K562 (cell line): ENCODE measurements at regions of chr12 and their contacts with region 1.

Region 1: DNA sequence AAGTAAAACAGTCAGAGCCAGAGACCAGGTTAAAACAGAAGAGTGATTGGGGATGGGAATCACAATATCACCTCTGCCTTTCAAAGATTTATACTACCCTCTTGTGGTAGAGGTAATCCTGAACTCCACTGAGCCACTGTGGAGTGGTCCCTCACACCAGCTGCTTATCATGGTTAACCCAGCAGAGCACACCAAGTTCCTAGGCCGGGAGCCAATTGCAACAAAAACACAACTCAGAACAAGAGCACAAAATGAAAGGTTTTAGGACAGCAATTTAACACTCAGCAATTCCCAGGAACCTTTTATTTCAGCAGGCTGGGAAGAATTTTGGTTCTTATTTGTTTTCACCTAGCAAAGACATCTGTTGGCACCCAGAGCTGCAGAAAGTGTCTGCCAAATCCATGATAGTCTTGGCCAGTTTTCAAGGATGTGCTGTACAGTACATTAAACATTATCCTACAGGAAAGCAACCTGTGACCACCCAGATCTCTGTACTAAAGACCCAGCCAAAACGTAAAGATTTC is 220.5 kb upstream of the ATXN7L3B start:
- DNase-seq: peak in 3 of 4 experiments; percentile 6 to 55 (median 39)
- ATAC-seq: peak; percentile 99
- H3K4me3 ChIP-seq: no peak overlapping the region
- H3K27ac ChIP-seq: no peak overlapping the region
- H3K4me1 ChIP-seq: no peaks in the 10 kb centered on the region
- H3K27me3 ChIP-seq: no peaks in the 10 kb centered on the region
- CTCF ChIP-seq: peak; percentile 48 to 73 (median 59); a peak in 5 of 6 replicates
- EP300 ChIP-seq: no peak
- POLR2A ChIP-seq: no peak
- RAD21 ChIP-seq: peak; percentile 78 to 90

Region 2: GRCh38 chr12:73935817-73936216 is 381.3 kb before region 1 on chr12:
- CTCF ChIA-PET with region 1: no interaction called
- POLR2A ChIA-PET with region 1: no interaction called
- in situ Hi-C with region 1: no loop called
- intact Hi-C with region 1: loop called (anchors 5 kb)
- DNase-seq: no peak
- ATAC-seq: no peak
- H3K4me3 ChIP-seq: no peak overlapping the region
- H3K27ac ChIP-seq: no peak overlapping the region
- H3K4me1 ChIP-seq: no peaks in the 10 kb centered on the region
- H3K27me3 ChIP-seq: no peaks in the 10 kb centered on the region
- CTCF ChIP-seq: peak in 1 of 3 experiments; percentile 42; a peak in 2 of 6 replicates
- EP300 ChIP-seq: no peak
- POLR2A ChIP-seq: no peak
- RAD21 ChIP-seq: peak in 1 of 2 experiments; percentile 53; a peak in 3 of 4 replicates

Region 3: DNA sequence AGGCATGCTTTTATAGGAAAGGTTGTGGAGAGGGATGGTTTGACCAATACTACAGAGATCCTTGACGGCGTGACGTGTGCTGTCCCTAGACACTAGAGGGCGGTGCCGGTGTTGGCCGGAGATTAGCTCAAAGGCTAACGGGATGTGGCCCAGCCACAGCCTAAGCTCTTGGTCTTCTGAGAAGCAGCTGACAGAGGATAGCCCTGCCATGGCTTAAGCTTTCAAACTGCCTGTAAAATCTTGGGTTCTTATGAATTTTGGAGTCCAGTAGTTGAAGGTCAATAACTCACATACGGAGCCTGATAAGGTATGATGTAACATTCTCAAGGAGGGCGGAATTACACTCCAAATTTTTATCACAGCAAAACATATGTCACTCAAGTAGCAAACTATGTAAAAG is 295.2 kb before region 1 on chr12:
- CTCF ChIA-PET with region 1: no interaction called
- POLR2A ChIA-PET with region 1: no interaction called
- in situ Hi-C with region 1: loop called (anchors 10 kb)
- intact Hi-C with region 1: loop called (anchors 5 kb)
- DNase-seq: peak; percentile 39 to 74 (median 46)
- ATAC-seq: peak; percentile 100
- H3K4me3 ChIP-seq: no peak overlapping the region
- H3K27ac ChIP-seq: peak overlapping the region; percentile 61; the same call in 2 of the 3 replicates
- H3K4me1 ChIP-seq: peaks cover 0 to 5% of the 10 kb centered on the region in 2 experiments; a peak in 2 of 5 replicates
- H3K27me3 ChIP-seq: no peaks in the 10 kb centered on the region
- CTCF ChIP-seq: peak; percentile 66 to 85 (median 73)
- EP300 ChIP-seq: peak; percentile 77
- POLR2A ChIP-seq: no peak
- RAD21 ChIP-seq: peak; percentile 66 to 74

Region 4: GRCh38 chr12:74111688-74112360 is 205.3 kb before region 1 on chr12:
- CTCF ChIA-PET with region 1: interaction called, 9 read pairs
- POLR2A ChIA-PET with region 1: interaction called, 3 read pairs
- in situ Hi-C with region 1: no loop called
- intact Hi-C with region 1: loop called (anchors 1 kb)
- DNase-seq: peak in 2 of 4 experiments; percentile 7 to 67
- ATAC-seq: peak; percentile 96
- H3K4me3 ChIP-seq: no peak overlapping the region
- H3K27ac ChIP-seq: no peak overlapping the region
- H3K4me1 ChIP-seq: no peaks in the 10 kb centered on the region
- H3K27me3 ChIP-seq: no peaks in the 10 kb centered on the region
- CTCF ChIP-seq: peak; percentile 68 to 80 (median 71)
- EP300 ChIP-seq: no peak
- POLR2A ChIP-seq: no peak
- RAD21 ChIP-seq: peak; percentile 62 to 84

Region 5: DNA sequence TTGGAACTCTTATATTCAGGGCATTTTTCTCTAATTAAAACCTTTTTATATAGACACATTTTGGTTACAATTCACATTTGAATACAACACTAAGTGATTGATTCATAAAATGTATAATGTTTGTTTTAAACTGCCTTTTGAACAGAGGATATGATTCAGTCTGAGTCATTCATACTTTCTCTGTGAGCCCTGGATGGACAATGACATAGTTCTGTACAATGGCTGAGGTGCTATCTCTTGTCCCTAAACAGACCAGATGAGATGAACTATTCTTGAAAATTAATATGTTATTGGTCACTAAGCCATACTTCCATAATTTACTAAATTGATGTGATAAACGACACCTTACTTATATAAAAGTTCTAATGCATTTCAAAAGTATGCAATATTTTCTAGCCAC is 20.8 kb after region 1 on chr12:
- CTCF ChIA-PET with region 1: no interaction called
- POLR2A ChIA-PET with region 1: no interaction called
- in situ Hi-C with region 1: no loop called
- intact Hi-C with region 1: no loop called
- DNase-seq: no peak
- ATAC-seq: no peak
- H3K4me3 ChIP-seq: no peak overlapping the region
- H3K27ac ChIP-seq: no peak overlapping the region
- H3K4me1 ChIP-seq: no peaks in the 10 kb centered on the region
- H3K27me3 ChIP-seq: no peaks in the 10 kb centered on the region; a peak in 1 of 5 replicates
- CTCF ChIP-seq: no peak
- EP300 ChIP-seq: no peak
- POLR2A ChIP-seq: no peak
- RAD21 ChIP-seq: no peak

Region 6: GRCh38 chr12:74415633-74416032 is 98.5 kb after region 1 on chr12:
- CTCF ChIA-PET with region 1: no interaction called
- POLR2A ChIA-PET with region 1: no interaction called
- in situ Hi-C with region 1: no loop called
- intact Hi-C with region 1: loop called (anchors 5 kb)
- DNase-seq: peak in 3 of 4 experiments; percentile 15 to 37 (median 29)
- ATAC-seq: peak; percentile 73
- H3K4me3 ChIP-seq: no peak overlapping the region
- H3K27ac ChIP-seq: no peak overlapping the region
- H3K4me1 ChIP-seq: no peaks in the 10 kb centered on the region
- H3K27me3 ChIP-seq: no peaks in the 10 kb centered on the region
- CTCF ChIP-seq: peak; percentile 42 to 49 (median 46); a peak in 5 of 6 replicates
- EP300 ChIP-seq: no peak
- POLR2A ChIP-seq: no peak
- RAD21 ChIP-seq: peak; percentile 38 to 64; a peak in 3 of 4 replicates

Region 7: DNA sequence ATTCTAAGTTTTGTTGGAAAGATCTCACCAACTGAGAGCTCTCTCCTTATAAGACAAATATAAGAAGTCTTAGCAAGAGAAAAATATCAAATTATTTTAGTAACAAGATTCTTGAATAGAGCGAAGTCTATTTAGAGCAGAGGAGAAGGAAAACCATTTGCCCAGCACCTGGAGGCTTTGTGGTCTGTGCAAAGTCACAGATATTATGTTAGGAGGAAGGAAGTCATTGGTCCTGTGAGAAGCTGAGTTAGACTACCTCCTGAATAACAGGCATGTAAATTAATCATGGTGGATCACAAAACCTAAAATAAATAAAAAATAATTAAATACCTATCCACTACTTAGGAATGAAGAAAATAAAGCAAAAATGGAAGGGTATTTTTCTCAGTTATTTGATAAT is 182.1 kb after region 1 on chr12:
- CTCF ChIA-PET with region 1: no interaction called
- POLR2A ChIA-PET with region 1: no interaction called
- in situ Hi-C with region 1: no loop called
- intact Hi-C with region 1: no loop called
- DNase-seq: no peak
- ATAC-seq: no peak
- H3K4me3 ChIP-seq: no peak overlapping the region
- H3K27ac ChIP-seq: no peak overlapping the region
- H3K4me1 ChIP-seq: no peaks in the 10 kb centered on the region
- H3K27me3 ChIP-seq: no peaks in the 10 kb centered on the region
- CTCF ChIP-seq: no peak
- EP300 ChIP-seq: no peak
- POLR2A ChIP-seq: no peak
- RAD21 ChIP-seq: no peak

Region 8: DNA sequence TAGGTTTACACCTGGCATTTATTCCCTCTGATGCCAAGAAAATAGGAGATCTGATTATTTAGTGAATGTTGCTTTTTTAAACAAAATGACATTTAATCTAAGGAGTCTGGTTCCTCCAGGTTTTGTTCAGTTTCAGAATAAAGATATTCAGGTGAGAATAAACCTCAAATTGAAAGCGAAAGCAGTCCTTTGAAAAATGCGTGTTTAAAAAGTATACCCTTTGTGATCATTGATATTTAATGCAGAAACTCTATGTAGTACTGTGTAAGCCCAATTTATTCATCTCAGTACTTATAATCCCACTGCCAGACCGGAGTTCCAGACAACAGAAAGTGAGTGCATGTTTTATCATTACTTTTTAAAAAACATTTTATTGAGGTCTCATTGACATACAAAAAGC is 682.3 kb after region 1 on chr12:
- CTCF ChIA-PET with region 1: no interaction called
- POLR2A ChIA-PET with region 1: no interaction called
- in situ Hi-C with region 1: no loop called
- intact Hi-C with region 1: no loop called
- DNase-seq: no peak
- ATAC-seq: no peak
- H3K4me3 ChIP-seq: no peak overlapping the region
- H3K27ac ChIP-seq: no peak overlapping the region
- H3K4me1 ChIP-seq: no peaks in the 10 kb centered on the region
- H3K27me3 ChIP-seq: no peaks in the 10 kb centered on the region
- CTCF ChIP-seq: no peak
- EP300 ChIP-seq: no peak
- POLR2A ChIP-seq: no peak
- RAD21 ChIP-seq: no peak